Activated CD4-positive, alpha-beta memory T cell treated with anti-CD3 and anti-CD28 coated beads for 36 hours (primary cell): ENCODE measurements at regions of chr2 and their contacts with region 1.

Region 1: GRCh38 chr2:196263181-196263747 is 91.9 kb upstream of the STK17B start:
- DNase-seq: peak; percentile 62
- H3K4me3 Mint-ChIP-seq: peak overlapping the region; percentile 75
- H3K27ac Mint-ChIP-seq: peak overlapping the region; percentile 99
- H3K4me1 Mint-ChIP-seq: peaks cover 77% of the 10 kb centered on the region
- H3K27me3 Mint-ChIP-seq: no peaks in the 10 kb centered on the region

Region 2: DNA sequence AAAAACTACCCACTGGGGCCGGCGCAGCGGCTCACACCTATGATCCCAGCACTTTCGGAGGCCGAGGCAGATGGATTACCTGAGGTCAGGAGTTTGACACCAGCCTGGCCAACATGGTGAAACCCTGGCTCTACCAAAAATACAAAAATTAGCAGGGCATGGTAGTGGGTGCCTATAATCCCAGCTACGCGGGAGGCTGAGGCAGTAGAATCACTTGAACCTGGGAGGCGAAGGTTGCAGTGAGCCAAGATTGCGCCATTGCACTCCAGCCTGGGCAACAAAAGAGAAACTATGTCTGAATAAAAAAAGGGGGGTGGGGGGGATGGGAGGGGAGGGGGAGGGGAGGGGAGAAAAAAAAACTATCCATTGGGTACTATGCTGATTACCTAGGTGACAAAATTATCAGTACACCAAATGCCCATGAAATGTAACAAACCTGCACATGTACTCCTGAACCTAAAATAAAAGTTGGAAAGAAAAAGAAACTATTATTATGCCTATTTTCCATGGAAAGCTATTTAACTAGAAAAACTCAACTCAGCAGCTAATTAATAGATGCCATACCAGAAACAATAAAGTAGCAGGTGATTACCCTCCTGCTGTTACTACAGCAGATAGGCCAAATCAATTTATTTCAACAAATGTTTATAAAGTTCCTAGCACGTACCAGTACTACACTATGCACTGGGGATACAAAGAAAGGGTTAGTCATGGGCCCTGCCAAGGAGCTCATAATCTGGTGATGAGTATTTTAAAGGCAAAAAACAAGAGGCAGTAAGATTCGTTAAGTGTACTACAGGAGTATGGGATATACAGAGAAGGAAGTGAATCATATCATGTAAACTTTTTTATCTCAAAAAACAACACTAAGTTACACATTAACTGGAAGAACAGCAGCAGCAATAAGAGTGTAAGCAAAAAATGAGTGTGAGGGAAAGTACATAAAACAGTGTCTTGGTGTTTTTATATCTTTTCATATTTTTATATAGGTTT is 719.1 kb before region 1 on chr2:
- CTCF ChIA-PET with region 1: no interaction called
- POLR2A ChIA-PET with region 1: no interaction called
- intact Hi-C with region 1: loop called (anchors 1 kb)
- DNase-seq: peak; percentile 58
- H3K4me3 Mint-ChIP-seq: peak overlapping the region; percentile 23
- H3K27ac Mint-ChIP-seq: peak overlapping the region; percentile 91
- H3K4me1 Mint-ChIP-seq: peaks cover 57% of the 10 kb centered on the region
- H3K27me3 Mint-ChIP-seq: no peaks in the 10 kb centered on the region

Region 3: GRCh38 chr2:196160101-196160500 is 103.2 kb before region 1 on chr2:
- CTCF ChIA-PET with region 1: interaction called, 4 read pairs
- POLR2A ChIA-PET with region 1: interaction called, 49 read pairs
- intact Hi-C with region 1: loop called (anchors 1 kb)
- DNase-seq: peak; percentile 76
- H3K4me3 Mint-ChIP-seq: peak overlapping the region; percentile 39
- H3K27ac Mint-ChIP-seq: peak overlapping the region; percentile 96
- H3K4me1 Mint-ChIP-seq: peaks cover 77% of the 10 kb centered on the region
- H3K27me3 Mint-ChIP-seq: no peaks in the 10 kb centered on the region

Region 4: DNA sequence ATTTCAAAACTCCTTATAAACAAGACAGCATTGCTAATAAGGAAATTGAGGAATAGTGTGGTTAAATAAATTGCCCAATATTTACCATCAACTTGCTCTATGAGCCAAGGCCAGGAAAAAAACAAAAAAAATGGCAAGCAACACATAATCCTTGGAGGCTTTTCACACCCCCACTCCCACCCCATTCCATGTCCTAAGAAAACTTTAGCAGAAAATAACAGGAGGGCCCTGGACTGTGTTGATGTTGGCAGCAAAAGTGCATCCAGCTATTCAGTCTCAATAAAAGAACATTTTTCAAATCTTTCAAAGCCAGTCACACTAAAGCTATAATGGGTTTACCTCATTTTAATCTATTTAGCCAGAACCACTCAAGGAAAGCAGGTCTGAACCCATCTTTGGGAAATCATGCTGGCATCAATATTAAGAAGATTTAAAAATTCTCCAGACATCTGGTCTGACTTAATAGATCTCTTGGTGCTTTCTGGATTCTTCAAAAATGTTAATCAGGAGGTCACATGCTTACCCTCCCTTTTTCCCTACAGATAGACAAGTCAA is 57.3 kb before region 1 on chr2:
- CTCF ChIA-PET with region 1: interaction called, 3 read pairs
- POLR2A ChIA-PET with region 1: interaction called, 3 read pairs
- intact Hi-C with region 1: loop called (anchors 1 kb)
- DNase-seq: no peak
- H3K4me3 Mint-ChIP-seq: no peak overlapping the region
- H3K27ac Mint-ChIP-seq: peak overlapping the region; percentile 7
- H3K4me1 Mint-ChIP-seq: peaks cover 31% of the 10 kb centered on the region
- H3K27me3 Mint-ChIP-seq: no peaks in the 10 kb centered on the region

Region 5: DNA sequence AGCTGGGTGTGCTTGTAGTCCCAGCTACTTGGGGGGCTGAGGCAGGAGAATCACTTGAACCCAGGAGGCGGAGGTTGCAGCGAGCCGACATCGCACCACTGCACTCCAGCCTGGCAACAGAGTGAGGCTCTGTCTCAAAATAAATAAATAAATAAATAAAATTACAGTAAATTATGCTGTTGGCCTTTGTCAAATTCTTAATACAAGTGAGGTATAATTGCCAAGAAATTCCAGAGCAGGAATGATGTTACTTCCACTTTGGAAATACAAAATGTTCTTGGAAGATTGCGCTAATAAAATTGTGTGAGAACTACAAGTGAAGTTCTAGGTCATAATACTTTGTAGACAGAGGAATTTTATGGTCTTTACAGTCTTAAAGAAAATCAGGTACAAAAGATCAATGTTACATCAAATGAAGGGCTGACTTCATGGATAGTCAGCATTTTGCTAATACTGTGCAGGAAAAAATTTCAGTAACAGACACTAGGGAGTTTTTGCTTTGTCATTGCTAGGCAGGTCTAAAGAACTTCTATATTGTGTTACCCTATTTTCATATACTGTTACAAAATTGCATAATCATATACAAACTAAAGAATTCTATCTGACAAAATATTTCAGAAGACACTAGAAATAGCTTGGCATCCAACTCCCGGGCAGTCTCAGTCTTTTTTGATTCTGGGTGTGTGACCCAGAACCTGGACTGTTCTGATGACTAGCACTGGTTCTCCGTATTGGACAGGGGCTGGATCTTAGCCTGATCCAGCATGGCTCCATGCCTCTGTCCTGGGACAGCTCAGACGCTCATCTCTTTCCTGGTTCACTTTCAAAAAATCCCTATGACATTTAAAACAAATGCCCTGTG is 15.9 kb before region 1 on chr2:
- CTCF ChIA-PET with region 1: interaction called, 6 read pairs
- POLR2A ChIA-PET with region 1: interaction called, 37 read pairs
- intact Hi-C with region 1: loop called (anchors 1 kb)
- DNase-seq: no peak
- H3K4me3 Mint-ChIP-seq: no peak overlapping the region
- H3K27ac Mint-ChIP-seq: no peak overlapping the region
- H3K4me1 Mint-ChIP-seq: peaks cover 70% of the 10 kb centered on the region
- H3K27me3 Mint-ChIP-seq: no peaks in the 10 kb centered on the region

Region 6: DNA sequence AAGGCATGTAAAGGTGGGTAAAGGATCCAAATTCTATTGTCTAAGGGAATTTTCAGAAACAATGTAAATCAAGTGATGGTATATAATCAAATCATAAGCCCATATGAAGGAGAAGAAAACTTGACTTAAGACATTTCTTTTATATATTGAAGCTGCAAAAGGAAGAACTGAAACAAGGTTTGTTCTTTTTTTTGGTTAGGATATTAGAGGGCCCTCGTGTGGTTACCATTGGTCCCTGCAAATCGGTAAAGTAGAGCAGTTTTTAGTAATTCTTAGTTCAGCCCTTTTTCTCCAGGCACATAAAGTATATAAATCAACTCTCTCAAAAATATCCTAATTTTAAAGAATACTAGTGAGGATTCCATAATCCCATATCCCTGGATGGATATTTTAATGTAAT is 13.7 kb after region 1 on chr2:
- CTCF ChIA-PET with region 1: interaction called, 23 read pairs
- POLR2A ChIA-PET with region 1: interaction called, 20 read pairs
- intact Hi-C with region 1: loop called (anchors 1 kb)
- DNase-seq: peak; percentile 42
- H3K4me3 Mint-ChIP-seq: no peak overlapping the region
- H3K27ac Mint-ChIP-seq: peak overlapping the region; percentile 69
- H3K4me1 Mint-ChIP-seq: peaks cover 57% of the 10 kb centered on the region
- H3K27me3 Mint-ChIP-seq: no peaks in the 10 kb centered on the region

Region 7: DNA sequence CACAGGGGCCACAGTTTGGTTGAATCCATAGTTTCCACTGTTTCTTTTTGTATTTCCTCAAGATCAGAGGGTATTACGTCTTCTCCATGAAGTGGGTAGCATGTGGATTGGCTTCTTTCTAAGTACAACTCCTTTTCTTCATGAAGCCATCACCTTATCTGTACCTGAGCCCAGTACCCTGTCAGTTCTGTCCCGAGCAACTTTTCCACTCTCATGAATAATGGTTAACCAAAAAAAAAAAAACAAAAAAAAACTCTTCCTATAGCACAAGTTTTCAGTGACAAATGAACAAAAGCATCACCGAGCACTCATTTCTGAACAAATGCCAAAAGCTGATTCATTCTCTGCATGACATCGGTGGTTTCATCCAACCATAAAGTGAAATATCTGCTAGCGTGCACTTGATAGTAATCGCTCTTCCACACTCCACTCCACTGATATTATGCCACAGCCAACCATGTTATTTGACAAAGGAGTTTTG is 323.3 kb after region 1 on chr2:
- CTCF ChIA-PET with region 1: no interaction called
- POLR2A ChIA-PET with region 1: no interaction called
- intact Hi-C with region 1: no loop called
- DNase-seq: no peak
- H3K4me3 Mint-ChIP-seq: no peak overlapping the region
- H3K27ac Mint-ChIP-seq: no peak overlapping the region
- H3K4me1 Mint-ChIP-seq: no peaks in the 10 kb centered on the region
- H3K27me3 Mint-ChIP-seq: peaks cover 32% of the 10 kb centered on the region

Region 8: DNA sequence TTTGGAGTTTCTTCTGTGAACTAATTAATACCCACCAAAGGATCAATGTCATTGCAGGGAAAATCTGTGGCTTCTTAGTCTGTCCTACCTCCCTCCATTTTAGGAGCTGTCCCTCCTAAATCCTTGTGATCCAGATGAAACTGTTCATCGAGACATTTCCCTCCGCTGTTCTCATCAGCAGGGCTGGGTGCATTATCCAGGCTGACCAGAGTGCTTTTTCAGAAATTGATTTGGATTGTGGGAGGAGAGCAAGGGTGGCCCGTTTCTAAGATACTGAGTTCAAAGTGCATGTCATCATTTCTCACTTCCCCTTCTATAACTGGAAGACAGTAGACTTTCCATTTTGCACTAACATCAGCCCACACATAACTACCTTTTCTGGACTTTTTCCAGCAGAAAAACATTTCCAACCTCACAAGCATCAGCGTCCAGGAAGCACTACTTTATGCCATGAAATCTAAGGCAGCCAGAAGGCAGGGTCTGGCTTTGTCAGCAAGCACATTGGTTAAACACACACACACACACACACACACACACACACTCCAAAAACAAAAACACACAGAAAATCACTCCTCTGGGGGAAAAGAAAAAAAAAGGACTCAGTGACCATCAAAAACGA is 953.2 kb after region 1 on chr2:
- CTCF ChIA-PET with region 1: no interaction called
- POLR2A ChIA-PET with region 1: no interaction called
- intact Hi-C with region 1: loop called (anchors 10 kb)
- DNase-seq: no peak
- H3K4me3 Mint-ChIP-seq: peak overlapping the region; percentile 62
- H3K27ac Mint-ChIP-seq: peak overlapping the region; percentile 94
- H3K4me1 Mint-ChIP-seq: peaks cover 86% of the 10 kb centered on the region
- H3K27me3 Mint-ChIP-seq: no peaks in the 10 kb centered on the region